IMR-90 (cell line): ENCODE measurements at regions of chr17 and their contacts with region 1.

Region 1: GRCh38 chr17:40303009-40303657 is 5.8 kb upstream of the RARA start:
- DNase-seq: peak; percentile 82
- ATAC-seq: peak; percentile 58
- H3K4me3 ChIP-seq: no peak overlapping the region
- H3K27ac ChIP-seq: no peak overlapping the region
- H3K4me1 ChIP-seq: peaks cover 34% of the 10 kb centered on the region
- H3K27me3 ChIP-seq: no peaks in the 10 kb centered on the region
- CTCF ChIP-seq: peak; percentile 83
- POLR2A ChIP-seq: peak; percentile 48; the same call in 1 of the 2 replicates
- RAD21 ChIP-seq: peak; percentile 93

Region 2: DNA sequence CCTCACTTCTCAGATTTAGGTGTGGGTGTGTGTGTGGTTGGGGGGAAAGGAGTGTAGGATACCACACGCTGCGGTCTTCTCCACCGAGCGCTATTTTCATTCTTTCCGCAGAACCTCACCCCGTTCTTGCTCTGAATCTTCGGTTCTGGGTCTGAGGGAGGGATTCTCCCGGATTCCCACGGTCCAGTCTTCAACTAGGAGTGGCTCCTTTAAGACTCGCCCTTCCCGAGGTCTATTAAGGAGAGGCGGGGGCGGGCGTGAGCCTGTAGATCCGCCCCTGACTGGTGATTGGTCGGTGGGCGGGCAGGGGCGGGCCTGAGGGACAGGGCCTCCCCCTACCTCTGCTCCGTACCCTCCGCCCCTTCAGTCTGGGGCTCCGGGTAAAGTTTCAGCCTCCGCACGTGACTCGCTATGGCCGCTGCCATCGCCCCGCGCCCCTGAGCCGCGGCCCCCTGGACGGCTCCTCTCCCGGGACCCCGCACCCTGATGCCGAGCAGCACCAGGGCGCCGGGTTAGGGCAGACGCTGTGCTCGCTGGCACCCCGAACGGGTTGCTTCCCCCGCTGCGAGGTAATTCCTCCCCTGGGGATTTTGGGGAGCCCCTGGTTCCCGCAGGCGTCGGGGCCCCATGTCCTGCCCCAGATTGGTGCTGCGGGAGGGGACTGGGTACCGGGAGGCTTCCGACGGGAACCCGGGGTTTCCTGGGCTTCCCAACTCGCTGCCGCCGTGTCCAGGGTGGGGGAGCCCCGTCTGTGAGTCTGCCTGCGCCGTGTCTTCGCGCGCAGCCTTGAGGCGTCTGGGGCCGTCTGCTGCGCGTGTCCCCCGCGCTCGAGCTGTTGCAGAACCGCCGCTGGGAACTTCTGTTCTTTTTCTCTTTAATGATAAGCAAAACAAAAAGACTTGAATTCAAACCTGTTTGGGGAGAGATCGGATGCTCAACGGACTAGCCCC is 15.0 kb after region 1 on chr17:
- CTCF ChIA-PET with region 1: interaction called, 11 read pairs
- POLR2A ChIA-PET with region 1: no interaction called
- dilution Hi-C with region 1: no loop called
- in situ Hi-C with region 1: no loop called
- intact Hi-C with region 1: no loop called
- DNase-seq: peak; percentile 94
- ATAC-seq: peak; percentile 91
- H3K4me3 ChIP-seq: peak overlapping the region; percentile 73
- H3K27ac ChIP-seq: peak overlapping the region; percentile 83
- H3K4me1 ChIP-seq: peaks cover 67% of the 10 kb centered on the region
- H3K27me3 ChIP-seq: no peaks in the 10 kb centered on the region
- CTCF ChIP-seq: no peak
- POLR2A ChIP-seq: peak; percentile 86
- RAD21 ChIP-seq: no peak

Region 3: DNA sequence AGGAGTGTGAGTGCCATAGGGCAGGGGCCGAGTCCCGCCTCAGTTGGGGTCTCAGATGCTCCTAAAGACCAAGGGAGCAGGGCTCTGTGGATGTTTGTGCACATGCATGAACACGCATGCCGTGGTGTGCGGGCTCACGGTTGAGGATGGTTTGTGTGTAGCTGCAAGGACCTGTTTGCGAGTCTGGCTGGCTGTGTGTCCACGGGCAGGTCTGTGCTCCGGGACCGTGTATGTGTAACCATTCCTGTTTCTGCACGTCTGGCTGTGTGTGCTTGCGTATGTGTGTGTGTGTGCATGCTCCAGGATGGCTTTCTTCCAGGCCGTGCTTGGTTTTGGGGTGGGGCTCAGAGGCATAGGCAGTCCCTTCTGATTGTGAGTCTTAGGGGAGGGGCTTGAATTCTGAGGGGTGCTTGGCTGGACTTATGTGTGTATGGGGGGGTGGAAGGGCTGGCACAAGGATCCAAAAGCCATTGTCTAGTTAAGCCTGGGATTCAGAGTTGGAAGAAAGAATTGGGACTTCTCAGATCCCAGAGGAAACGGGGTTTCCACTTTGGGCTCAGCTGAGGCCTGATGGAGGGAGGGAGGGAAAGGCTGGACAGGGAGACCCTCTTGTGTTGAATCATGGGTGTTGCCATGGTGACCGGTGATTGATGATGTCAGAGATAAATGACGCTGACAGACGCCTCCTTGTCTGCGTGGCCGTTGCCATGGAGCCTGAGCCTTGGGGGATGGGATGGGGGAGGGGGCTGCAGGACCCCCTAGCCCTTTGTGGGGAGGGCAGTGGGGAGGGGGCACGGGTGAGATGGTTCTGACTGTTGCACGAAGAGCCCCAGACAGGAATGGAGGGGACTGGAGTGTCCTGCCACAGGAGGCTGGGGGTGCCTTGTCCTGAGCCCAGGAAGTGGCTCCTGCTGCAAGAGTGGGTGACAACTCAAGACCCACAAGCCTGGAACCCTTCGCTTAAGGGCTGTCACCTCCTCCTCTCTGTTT is 47.1 kb after region 1 on chr17:
- CTCF ChIA-PET with region 1: interaction called, 9 read pairs
- POLR2A ChIA-PET with region 1: interaction called, 3 read pairs
- dilution Hi-C with region 1: no loop called
- in situ Hi-C with region 1: loop called (anchors 5 kb)
- intact Hi-C with region 1: loop called (anchors 1 kb)
- DNase-seq: peak; percentile 38
- ATAC-seq: no peak
- H3K4me3 ChIP-seq: no peak overlapping the region
- H3K27ac ChIP-seq: no peak overlapping the region
- H3K4me1 ChIP-seq: peaks cover 41% of the 10 kb centered on the region
- H3K27me3 ChIP-seq: no peaks in the 10 kb centered on the region
- CTCF ChIP-seq: no peak
- POLR2A ChIP-seq: no peak
- RAD21 ChIP-seq: no peak

Region 4: DNA sequence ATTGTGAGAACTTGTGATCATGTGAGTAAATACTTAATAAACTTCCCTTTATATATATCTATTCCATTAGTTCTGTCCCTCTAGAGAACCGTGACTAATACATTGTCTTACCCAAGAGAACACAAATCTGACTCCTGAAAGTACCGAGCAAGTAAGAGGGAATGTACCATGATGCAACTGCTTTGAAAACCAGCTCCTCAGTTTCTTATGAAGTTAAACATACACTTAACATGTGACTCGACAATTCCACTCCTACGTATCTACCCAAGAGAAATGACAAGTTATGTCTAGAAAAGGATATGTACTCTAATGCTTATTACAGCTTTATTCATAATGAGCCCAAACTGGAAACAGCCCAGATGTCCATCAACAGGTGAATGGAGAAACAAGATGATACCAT is 70.2 kb after region 1 on chr17:
- CTCF ChIA-PET with region 1: no interaction called
- POLR2A ChIA-PET with region 1: no interaction called
- dilution Hi-C with region 1: no loop called
- in situ Hi-C with region 1: no loop called
- intact Hi-C with region 1: no loop called
- DNase-seq: peak; percentile 83
- ATAC-seq: peak; percentile 60
- H3K4me3 ChIP-seq: no peak overlapping the region
- H3K27ac ChIP-seq: no peak overlapping the region
- H3K4me1 ChIP-seq: no peaks in the 10 kb centered on the region
- H3K27me3 ChIP-seq: no peaks in the 10 kb centered on the region
- CTCF ChIP-seq: no peak
- POLR2A ChIP-seq: no peak
- RAD21 ChIP-seq: no peak

Region 5: DNA sequence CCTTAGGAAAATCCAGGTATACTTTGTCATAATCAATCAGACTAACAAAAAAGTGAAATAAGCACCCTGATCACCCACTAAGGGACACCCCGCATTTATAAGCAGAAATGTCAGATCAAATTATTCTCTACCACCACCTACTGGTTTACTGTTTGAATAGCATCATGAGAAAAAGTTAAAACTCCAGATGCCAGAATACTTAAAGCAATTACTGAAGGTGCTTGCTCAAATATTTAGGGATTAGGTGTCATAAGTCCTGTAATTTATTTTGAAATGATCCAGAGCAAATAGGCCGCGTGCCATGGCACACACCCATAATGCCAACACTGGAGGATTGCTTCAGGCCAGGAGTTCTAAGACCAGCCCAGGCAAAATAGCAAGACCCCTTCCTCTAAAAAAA is 112.3 kb after region 1 on chr17:
- CTCF ChIA-PET with region 1: interaction called, 4 read pairs
- POLR2A ChIA-PET with region 1: no interaction called
- dilution Hi-C with region 1: no loop called
- in situ Hi-C with region 1: no loop called
- intact Hi-C with region 1: loop called (anchors 2 kb)
- DNase-seq: peak; percentile 59
- ATAC-seq: peak; percentile 25; the same call in 1 of the 2 replicates
- H3K4me3 ChIP-seq: no peak overlapping the region
- H3K27ac ChIP-seq: peak overlapping the region; percentile 39; the same call in 1 of the 2 replicates
- H3K4me1 ChIP-seq: no peaks in the 10 kb centered on the region
- H3K27me3 ChIP-seq: no peaks in the 10 kb centered on the region
- CTCF ChIP-seq: peak; percentile 68
- POLR2A ChIP-seq: no peak
- RAD21 ChIP-seq: peak; percentile 51

Region 6: GRCh38 chr17:40536295-40537171 is 233.4 kb after region 1 on chr17:
- CTCF ChIA-PET with region 1: no interaction called
- POLR2A ChIA-PET with region 1: no interaction called
- dilution Hi-C with region 1: no loop called
- in situ Hi-C with region 1: loop called (anchors 5 kb)
- intact Hi-C with region 1: loop called (anchors 5 kb)
- DNase-seq: peak; percentile 75
- ATAC-seq: peak; percentile 6; the same call in 1 of the 2 replicates
- H3K4me3 ChIP-seq: no peak overlapping the region
- H3K27ac ChIP-seq: peak overlapping the region; percentile 76
- H3K4me1 ChIP-seq: peaks cover 46% of the 10 kb centered on the region
- H3K27me3 ChIP-seq: no peaks in the 10 kb centered on the region
- CTCF ChIP-seq: no peak
- POLR2A ChIP-seq: no peak; the same call in 1 of the 2 replicates
- RAD21 ChIP-seq: no peak